ENCODE measurements at regions of chr9 and their contacts with region 1.

Region 1: DNA sequence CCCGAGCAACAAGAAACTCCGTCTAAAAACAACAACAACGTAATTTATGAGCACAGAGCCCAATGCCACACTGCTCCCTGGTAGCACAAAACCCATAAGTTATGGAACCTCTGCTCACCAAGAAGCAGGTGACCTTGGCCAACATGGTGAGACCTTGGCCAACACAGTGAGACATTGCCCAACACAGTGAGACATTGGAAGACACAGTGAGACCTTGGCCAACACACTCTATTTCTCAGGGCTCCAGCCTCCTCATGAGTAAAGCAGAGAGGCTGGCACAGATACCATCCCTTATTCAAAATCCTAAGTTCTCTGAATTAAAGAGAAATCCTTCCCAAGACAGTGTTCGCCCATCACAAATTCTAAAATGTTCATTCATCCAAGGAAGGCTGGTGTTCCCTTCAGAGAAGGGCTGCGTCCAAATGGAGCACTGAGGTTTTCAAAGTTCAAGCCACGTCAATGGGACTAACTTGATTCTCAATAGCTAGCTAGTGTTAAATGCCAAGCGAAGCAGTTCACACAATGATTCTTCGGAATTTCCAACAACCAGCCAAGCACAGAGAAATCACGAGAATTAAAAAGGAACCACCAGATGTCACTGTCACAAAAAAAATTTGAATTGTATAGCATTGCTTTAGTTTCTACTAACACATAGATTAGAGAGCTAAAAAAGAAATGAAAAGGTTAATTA is 29.5 kb downstream of the TTC39B start:
- DNase-seq: peak in 2 of 9 experiments; percentile 49 to 59
- ATAC-seq: no peak
- H3K4me3 ChIP-seq: no peak overlapping the region
- H3K4me3 Mint-ChIP-seq: no peak overlapping the region
- H3K27ac ChIP-seq: no peak overlapping the region
- H3K27ac Mint-ChIP-seq: no peak overlapping the region
- H3K4me1 ChIP-seq: no peaks in the 10 kb centered on the region
- H3K4me1 Mint-ChIP-seq: peaks cover 52% of the 10 kb centered on the region
- H3K27me3 ChIP-seq: no peaks in the 10 kb centered on the region
- H3K27me3 Mint-ChIP-seq: no peaks in the 10 kb centered on the region
- CTCF ChIP-seq: peak; percentile 56

Region 2: GRCh38 chr9:14627513-14627912 is 650.0 kb before region 1 on chr9:
- CTCF ChIA-PET with region 1: no interaction called
- POLR2A ChIA-PET with region 1: no interaction called
- intact Hi-C with region 1: no loop called
- DNase-seq: no peak
- ATAC-seq: no peak
- H3K4me3 ChIP-seq: no peak overlapping the region
- H3K4me3 Mint-ChIP-seq: no peak overlapping the region
- H3K27ac ChIP-seq: no peak overlapping the region
- H3K27ac Mint-ChIP-seq: no peak overlapping the region
- H3K4me1 ChIP-seq: no peaks in the 10 kb centered on the region
- H3K4me1 Mint-ChIP-seq: no peaks in the 10 kb centered on the region
- H3K27me3 ChIP-seq: no peaks in the 10 kb centered on the region
- H3K27me3 Mint-ChIP-seq: no peaks in the 10 kb centered on the region
- CTCF ChIP-seq: no peak

Region 3: DNA sequence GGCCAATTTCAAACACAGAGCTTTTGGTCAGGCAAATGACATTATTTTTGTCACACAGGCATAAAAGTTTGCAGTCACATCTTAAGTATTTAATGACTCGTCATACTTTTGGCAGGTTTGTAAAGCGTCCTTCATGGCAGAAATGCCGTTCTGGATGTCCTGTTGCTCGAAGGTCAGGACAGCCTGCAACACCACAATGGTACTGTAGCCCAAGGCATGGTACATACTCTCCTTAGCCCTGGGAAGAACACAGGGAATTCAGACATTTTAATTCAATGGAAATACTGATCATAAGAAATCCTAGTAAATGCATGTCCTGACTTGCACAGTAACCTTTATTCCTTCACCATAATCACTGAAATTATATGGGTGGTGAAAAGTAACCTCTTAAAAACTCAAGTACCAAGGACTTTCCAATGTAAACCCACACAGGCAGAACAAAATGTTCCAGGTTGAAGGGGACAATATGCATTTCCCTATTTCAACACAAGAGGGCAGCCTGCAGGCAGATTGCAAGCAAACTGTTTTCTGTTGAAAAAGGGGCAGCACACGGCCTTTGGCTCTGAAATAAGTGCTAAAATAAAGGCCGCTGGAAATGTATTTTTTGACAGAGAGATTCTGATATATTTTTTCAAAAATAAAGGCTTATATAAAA is 66.3 kb before region 1 on chr9:
- CTCF ChIA-PET with region 1: interaction called, 3 read pairs
- POLR2A ChIA-PET with region 1: no interaction called
- intact Hi-C with region 1: loop called in 1 of 2 experiments (anchors 2 kb)
- DNase-seq: peak; percentile 21 to 75 (median 56)
- ATAC-seq: peak; percentile 56
- H3K4me3 ChIP-seq: no peak overlapping the region
- H3K4me3 Mint-ChIP-seq: no peak overlapping the region
- H3K27ac ChIP-seq: no peak overlapping the region
- H3K27ac Mint-ChIP-seq: no peak overlapping the region
- H3K4me1 ChIP-seq: no peaks in the 10 kb centered on the region
- H3K4me1 Mint-ChIP-seq: peaks cover 4% of the 10 kb centered on the region
- H3K27me3 ChIP-seq: no peaks in the 10 kb centered on the region
- H3K27me3 Mint-ChIP-seq: no peaks in the 10 kb centered on the region
- CTCF ChIP-seq: peak; percentile 90

Region 4: GRCh38 chr9:15416880-15417279 is 139.3 kb after region 1 on chr9:
- CTCF ChIA-PET with region 1: interaction called, 10 read pairs
- POLR2A ChIA-PET with region 1: no interaction called
- intact Hi-C with region 1: loop called (anchors 1 kb)
- DNase-seq: peak in 7 of 9 experiments; percentile 26 to 64 (median 47)
- ATAC-seq: no peak
- H3K4me3 ChIP-seq: no peak overlapping the region
- H3K4me3 Mint-ChIP-seq: no peak overlapping the region
- H3K27ac ChIP-seq: no peak overlapping the region
- H3K27ac Mint-ChIP-seq: no peak overlapping the region
- H3K4me1 ChIP-seq: peaks cover 1% of the 10 kb centered on the region
- H3K4me1 Mint-ChIP-seq: peaks cover 4% of the 10 kb centered on the region
- H3K27me3 ChIP-seq: no peaks in the 10 kb centered on the region
- H3K27me3 Mint-ChIP-seq: no peaks in the 10 kb centered on the region
- CTCF ChIP-seq: peak; percentile 38

Region 5: DNA sequence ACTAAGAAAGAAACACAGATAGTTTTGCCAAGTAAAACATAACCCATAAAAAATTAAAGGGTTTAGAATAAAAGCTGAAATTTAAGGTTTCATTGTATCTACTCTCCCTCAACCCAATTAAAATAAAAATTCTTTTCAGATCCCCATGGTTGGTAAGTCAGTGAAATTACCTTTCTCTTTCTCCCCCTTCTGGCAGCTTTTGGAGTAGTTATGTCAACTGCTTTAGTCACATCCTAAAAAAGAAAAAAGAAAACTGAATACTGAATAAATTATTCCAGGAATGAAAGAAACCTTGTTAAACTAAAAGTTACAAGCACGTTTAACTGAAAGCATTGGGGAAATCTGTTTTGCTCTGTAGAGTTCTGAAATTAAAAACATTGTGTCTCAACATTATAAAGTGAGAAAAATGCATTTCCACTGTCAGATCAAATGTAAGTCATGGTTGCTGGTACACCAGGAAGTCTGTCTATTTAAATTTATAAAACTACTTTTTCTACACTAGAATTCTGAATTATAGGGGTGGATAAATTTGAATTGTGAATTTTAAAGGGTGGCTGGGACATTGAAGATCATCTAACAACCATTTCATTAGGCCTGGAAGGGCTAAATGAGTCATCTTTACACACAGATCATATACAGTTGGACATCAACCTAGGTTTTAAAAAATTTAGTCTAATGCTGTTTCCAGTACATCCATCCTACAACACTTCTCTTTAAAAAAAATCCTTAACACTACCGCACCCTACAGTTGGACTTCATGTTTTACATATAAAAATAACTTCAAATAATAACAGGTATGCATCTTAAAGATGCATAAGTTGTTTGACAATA is 208.5 kb after region 1 on chr9:
- CTCF ChIA-PET with region 1: no interaction called
- POLR2A ChIA-PET with region 1: no interaction called
- intact Hi-C with region 1: loop called in 1 of 2 experiments (anchors 5 kb)
- DNase-seq: peak in 2 of 9 experiments; percentile 31 to 51
- ATAC-seq: no peak
- H3K4me3 ChIP-seq: no peak overlapping the region
- H3K4me3 Mint-ChIP-seq: no peak overlapping the region
- H3K27ac ChIP-seq: no peak overlapping the region
- H3K27ac Mint-ChIP-seq: no peak overlapping the region
- H3K4me1 ChIP-seq: no peaks in the 10 kb centered on the region
- H3K4me1 Mint-ChIP-seq: peaks cover 48% of the 10 kb centered on the region
- H3K27me3 ChIP-seq: no peaks in the 10 kb centered on the region
- H3K27me3 Mint-ChIP-seq: no peaks in the 10 kb centered on the region
- CTCF ChIP-seq: peak; percentile 61

Region 6: DNA sequence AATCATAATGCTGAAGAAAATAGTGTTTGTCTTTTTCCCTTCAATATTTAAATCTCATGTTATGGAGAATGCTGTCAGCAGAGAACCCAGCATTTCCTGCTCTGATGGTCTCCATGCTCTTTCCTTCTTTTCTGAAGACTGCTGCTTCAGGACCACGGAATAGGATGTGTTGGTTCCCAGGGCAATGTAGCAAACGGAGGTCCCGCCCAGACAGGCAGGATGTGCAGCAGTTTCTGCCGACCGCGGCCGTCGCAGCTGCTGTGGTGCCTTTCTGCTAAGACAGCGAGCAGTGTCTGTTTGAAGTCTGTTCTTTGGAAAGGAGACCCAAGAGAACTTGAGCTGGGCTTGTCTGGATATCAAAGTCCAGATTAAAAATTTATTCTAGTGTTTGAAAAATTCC is 929.6 kb after region 1 on chr9:
- CTCF ChIA-PET with region 1: no interaction called
- POLR2A ChIA-PET with region 1: no interaction called
- intact Hi-C with region 1: no loop called
- DNase-seq: peak in 5 of 9 experiments; percentile 12 to 50 (median 21)
- ATAC-seq: peak; percentile 36
- H3K4me3 ChIP-seq: no peak overlapping the region
- H3K4me3 Mint-ChIP-seq: peak overlapping the region; percentile 44
- H3K27ac ChIP-seq: no peak overlapping the region
- H3K27ac Mint-ChIP-seq: no peak overlapping the region
- H3K4me1 ChIP-seq: no peaks in the 10 kb centered on the region
- H3K4me1 Mint-ChIP-seq: peaks cover 11% of the 10 kb centered on the region
- H3K27me3 ChIP-seq: no peaks in the 10 kb centered on the region
- H3K27me3 Mint-ChIP-seq: peaks cover 3% of the 10 kb centered on the region
- CTCF ChIP-seq: no peak